Cardiac septum (tissue), 1 donor: ENCODE measurements at regions of chrX and their contacts with region 1.

Region 1: DNA sequence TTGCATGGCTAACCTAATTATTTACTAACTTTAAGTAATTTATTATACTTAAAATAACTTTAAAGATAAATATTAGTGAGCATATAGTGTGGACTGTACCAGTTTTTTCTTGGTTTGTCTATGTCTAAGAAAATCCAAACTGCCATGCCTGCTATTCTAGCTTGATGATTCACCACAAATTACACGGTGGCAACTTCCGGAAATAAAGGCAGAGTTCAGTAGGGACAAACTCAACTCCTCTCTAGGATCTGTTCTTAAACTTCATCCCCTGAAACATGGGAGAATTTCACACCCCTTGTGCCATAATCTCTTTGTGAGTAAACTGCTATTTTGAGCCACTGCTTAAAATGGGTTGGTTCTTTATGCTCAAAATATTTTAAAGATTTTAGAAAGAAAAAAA is 213.6 kb upstream of the NRK start:
- DNase-seq: no peak

Region 2: DNA sequence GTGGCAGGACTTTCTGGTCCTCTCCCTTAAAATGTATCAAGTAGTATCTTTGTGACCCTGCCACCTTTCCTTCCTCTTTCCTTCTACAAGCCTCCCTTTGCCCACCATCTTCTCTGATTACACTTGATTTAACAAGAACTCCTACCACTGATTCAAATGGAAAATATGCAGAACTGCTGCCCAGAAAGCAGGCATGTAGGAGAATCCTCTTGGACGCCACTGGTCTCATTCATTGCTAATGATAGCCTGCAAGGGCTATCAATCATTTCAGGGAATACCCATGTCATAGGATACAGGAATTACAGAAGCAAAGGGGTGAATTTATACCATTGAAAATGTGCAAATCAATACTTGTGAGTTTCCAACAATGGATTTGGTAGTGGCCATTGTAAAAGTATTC is 81.0 kb before region 1 on chrX:
- intact Hi-C with region 1: loop called (anchors 2 kb)
- DNase-seq: no peak